Activated B cell treated with CpG ODN at 0.5 μM for 24 hours (primary cell): ENCODE measurements at regions of chr1 and their contacts with region 1.

Region 1: DNA sequence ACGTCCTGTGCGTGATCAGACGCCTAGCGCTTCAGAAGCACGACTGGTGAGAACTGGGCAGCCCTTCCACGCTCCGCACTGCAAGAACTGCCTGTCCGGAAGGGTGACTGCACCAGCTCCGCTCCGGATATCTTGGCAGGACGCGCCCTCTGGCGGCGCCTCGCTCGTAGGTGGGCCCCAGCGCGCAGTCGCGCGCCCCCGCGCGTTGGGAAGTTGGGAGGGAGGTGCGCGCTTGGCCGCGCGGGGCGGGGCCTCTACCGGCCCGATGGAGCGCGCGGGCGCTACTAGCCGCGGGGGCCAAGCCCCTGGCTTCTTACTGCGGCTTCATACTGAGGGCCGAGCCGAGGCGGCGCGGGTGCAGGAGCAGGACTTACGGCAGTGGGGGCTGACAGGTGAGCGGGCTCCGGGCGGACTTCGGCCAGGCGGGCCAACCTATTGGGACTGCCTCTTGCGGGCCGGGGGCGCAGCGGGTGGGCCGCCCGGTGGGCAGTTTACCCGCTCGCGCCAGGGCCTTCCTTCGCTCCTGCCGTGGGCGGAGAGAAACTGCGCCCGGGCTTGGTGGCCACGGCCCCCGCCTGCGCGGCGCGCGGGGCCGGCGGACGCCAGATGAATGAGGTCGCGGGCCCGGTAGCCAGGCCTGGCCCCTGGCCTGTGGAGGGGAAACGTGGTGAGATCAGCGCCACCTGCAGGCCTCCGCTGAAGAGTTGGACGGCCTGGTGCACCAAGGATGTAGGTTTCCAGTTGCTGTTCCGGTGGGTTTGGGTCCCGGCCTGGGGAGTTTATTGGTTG is at the start of gene CHD1L:
- DNase-seq: peak; percentile 94
- ATAC-seq: peak; percentile 88
- H3K4me3 Mint-ChIP-seq: peak within 1 kb of the TSS; percentile 93
- H3K27ac Mint-ChIP-seq: peak within 1 kb of the TSS; percentile 87
- H3K4me1 Mint-ChIP-seq: peaks cover 38% of the 10 kb centered on the region
- H3K27me3 Mint-ChIP-seq: no peaks in the 10 kb centered on the region
- CTCF ChIP-seq: peak; percentile 32
- total RNA-seq, gene CHD1L: 47.3 and 55.7 TPM in 2 replicates

Region 2: DNA sequence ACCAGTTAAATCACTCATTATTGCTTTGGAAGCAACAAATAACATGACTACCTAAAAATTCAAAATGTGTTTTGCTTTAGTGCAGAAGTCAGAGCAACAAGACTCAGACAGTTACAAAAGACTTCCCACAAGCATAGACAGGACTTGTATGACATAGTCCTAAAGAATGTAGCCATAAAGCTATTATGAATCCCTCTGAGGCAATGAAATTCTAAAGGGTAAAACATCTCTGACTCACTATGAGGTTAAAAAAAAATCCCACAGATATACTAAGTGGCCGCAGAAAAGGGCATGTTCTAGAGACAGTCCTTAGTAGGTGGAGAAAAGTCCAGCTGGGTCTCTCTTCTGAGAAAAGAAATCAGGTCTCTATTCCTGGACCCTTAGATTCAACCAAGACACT is 75.3 kb before region 1 on chr1:
- CTCF ChIA-PET with region 1: interaction called, 24 read pairs
- POLR2A ChIA-PET with region 1: interaction called, 57 read pairs
- intact Hi-C with region 1: loop called (anchors 1 kb)
- DNase-seq: no peak
- ATAC-seq: no peak
- H3K4me3 Mint-ChIP-seq: no peak overlapping the region
- H3K27ac Mint-ChIP-seq: no peak overlapping the region
- H3K4me1 Mint-ChIP-seq: peaks cover 14% of the 10 kb centered on the region
- H3K27me3 Mint-ChIP-seq: no peaks in the 10 kb centered on the region
- CTCF ChIP-seq: no peak

Region 3: DNA sequence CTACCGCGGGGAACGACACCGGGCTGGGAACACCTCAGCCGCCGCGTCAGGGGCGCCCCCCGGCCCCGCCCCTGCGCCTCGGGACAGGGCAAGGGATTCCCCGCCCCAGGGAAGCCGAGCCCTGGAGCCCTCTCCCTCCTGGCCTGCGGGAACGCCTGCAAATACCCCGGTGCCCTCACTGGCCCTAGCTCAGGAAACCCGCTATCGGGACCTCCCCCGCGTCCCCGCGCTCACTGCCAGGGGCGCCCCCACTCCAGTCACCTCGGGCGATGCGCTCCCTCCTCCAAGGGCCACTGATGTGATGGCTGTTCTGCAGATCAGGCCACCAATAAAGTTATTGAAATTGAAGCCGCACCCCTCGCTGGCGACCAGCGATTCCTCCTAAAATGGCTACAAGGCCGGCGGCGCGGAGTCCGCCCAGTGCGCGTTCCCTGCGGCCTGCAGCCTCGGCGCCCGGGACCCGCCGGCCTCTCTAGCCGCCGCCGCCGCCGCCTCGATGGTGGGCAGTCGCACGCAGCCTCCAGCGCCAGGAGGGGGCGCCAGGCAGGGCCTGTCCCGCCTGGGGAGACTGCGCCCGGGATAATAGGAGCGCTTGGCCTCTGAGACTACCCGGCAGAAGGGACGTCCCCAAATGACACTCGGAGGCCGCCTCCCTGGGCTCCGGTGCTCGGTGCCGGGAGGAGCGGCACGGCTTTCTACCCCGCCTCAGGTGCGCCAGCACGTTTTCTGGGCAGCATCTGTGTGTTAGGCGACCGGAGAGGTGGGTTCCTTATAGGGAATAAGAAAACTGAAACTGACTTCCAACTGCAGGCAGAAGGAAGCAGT is 70.3 kb before region 1 on chr1 and contains the start of gene PRKAB2:
- CTCF ChIA-PET with region 1: interaction called, 24 read pairs
- POLR2A ChIA-PET with region 1: interaction called, 57 read pairs
- intact Hi-C with region 1: loop called (anchors 1 kb)
- DNase-seq: peak; percentile 96
- ATAC-seq: peak; percentile 88
- H3K4me3 Mint-ChIP-seq: peak within 1 kb of the TSS; percentile 99
- H3K27ac Mint-ChIP-seq: peak within 1 kb of the TSS; percentile 98
- H3K4me1 Mint-ChIP-seq: peaks cover 32% of the 10 kb centered on the region
- H3K27me3 Mint-ChIP-seq: no peaks in the 10 kb centered on the region
- CTCF ChIP-seq: peak; percentile 83
- total RNA-seq, gene PRKAB2: 9.8 and 10.5 TPM in 2 replicates

Region 4: DNA sequence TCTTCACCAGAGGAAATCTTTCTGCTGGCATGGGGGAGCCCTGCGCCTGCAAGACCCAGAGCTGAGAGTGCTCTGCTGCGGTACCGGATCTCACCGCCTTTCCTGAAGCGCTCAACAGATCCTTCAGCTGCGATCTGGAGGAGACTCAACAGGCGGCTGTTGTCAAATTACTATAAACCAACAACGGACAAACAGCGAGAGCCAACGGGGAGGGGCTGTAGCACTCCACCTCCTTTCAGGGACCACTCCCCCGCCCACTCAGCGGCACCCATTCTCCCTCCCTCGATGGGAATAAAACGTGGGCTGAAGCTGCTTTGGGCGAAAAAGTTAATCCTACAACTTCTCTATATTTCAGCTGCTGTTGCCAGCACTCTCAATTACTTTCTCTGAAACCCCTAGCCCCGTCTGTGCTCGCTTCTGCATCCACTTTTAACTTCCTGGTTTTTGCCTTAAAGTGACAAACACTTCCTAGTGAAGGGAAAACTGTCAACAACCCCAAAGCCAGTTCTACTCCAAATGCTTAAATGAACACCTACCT is 17.4 kb before region 1 on chr1 and contains the start of gene FMO5:
- CTCF ChIA-PET with region 1: interaction called, 9 read pairs
- POLR2A ChIA-PET with region 1: interaction called, 14 read pairs
- intact Hi-C with region 1: loop called (anchors 1 kb)
- DNase-seq: peak; percentile 43
- ATAC-seq: peak; percentile 89
- H3K4me3 Mint-ChIP-seq: peak within 1 kb of the TSS; percentile 88
- H3K27ac Mint-ChIP-seq: peak within 1 kb of the TSS; percentile 85
- H3K4me1 Mint-ChIP-seq: peaks cover 18% of the 10 kb centered on the region
- H3K27me3 Mint-ChIP-seq: no peaks in the 10 kb centered on the region
- CTCF ChIP-seq: no peak
- total RNA-seq, gene FMO5: 1.5 and 1.8 TPM in 2 replicates

Region 5: GRCh38 chr1:147417028-147417427 is 174.4 kb after region 1 on chr1:
- CTCF ChIA-PET with region 1: no interaction called
- POLR2A ChIA-PET with region 1: no interaction called
- intact Hi-C with region 1: no loop called
- DNase-seq: no peak
- ATAC-seq: no peak
- H3K4me3 Mint-ChIP-seq: no peak overlapping the region
- H3K27ac Mint-ChIP-seq: no peak overlapping the region
- H3K4me1 Mint-ChIP-seq: no peaks in the 10 kb centered on the region
- H3K27me3 Mint-ChIP-seq: peaks cover 21% of the 10 kb centered on the region
- CTCF ChIP-seq: no peak

Region 6: DNA sequence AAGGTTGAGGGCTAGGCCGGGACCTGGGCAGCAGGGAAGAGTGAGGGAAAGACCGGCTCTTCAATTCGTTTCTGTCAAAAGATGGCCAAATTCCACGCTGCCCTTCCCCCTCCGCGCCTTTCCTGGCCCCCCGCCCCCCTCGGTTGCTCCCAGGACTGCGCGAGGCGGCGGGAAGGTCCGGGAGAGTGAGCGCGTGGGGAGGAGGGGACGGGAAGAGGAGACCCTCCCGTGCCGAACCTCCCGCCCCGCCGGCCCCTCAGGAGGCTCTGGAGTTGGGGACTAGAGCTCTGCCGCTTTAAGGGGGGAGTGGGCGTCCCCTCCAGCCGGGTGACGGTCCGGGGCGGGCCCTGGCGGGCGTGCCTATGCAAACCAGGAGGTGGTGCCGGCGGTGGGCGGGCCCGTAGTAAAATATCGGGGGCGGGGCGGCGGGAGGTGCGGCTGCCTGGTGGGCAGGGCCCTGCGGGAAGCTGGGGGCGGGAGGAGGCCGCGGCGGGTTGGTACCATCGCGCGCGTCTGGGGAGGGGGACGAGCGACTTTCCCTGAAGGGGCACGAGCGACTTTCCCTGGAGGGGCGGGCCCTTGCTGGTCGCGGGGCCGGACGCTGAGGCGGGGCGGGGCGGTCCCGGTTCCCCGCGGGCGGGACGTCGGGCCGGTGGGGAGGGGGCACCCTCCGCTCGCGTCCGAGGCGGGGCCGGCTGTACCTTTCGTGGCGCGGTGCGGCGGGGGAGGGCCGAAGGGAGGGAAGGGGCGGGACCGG is 356.9 kb after region 1 on chr1:
- CTCF ChIA-PET with region 1: no interaction called
- POLR2A ChIA-PET with region 1: no interaction called
- intact Hi-C with region 1: loop called (anchors 10 kb)
- DNase-seq: peak; percentile 92
- ATAC-seq: peak; percentile 84
- H3K4me3 Mint-ChIP-seq: peak overlapping the region; percentile 87
- H3K27ac Mint-ChIP-seq: peak overlapping the region; percentile 37
- H3K4me1 Mint-ChIP-seq: peaks cover 19% of the 10 kb centered on the region
- H3K27me3 Mint-ChIP-seq: no peaks in the 10 kb centered on the region
- CTCF ChIP-seq: no peak